Calu3 (cell line): ENCODE measurements at regions of chr14 and their contacts with region 1.

Region 1: DNA sequence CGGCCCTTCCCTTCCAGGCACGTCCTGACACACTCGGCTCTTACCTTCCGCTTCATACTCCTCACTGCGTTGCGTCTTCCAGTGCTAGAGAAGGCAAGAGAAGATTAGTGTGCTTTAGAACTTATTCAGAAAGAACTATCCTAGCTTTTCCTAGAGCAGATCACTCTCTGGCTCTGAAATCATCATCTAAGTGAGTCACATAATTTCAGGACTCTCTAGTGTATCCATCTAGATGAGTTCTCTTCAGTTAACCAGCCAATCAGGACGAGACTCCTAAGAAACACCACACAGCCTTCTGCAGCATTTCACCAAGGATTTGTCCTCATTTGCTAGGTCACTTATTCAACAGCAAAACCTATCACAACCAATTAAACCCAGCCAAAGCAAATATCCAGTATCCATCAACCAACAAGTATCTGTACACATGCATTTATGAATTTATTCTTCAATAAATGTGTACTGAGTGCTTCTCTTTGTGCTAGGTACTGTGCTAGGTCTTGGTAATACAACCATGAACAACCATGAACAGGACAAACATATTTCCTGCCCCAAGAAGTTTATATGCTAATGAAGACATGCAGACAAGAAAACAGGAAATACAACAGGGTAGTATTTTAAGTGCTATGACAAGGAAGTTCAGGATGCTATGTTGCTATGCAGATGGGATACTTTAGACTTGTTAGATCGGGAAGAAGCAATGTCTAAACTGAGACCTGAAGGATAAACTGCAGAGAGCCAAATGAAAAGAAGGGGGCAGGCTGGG is 52.1 kb downstream of the NIN start:
- DNase-seq: no peak
- H3K4me3 Mint-ChIP-seq: no peak overlapping the region
- H3K27ac Mint-ChIP-seq: no peak overlapping the region
- H3K4me1 Mint-ChIP-seq: no peaks in the 10 kb centered on the region
- H3K27me3 Mint-ChIP-seq: no peaks in the 10 kb centered on the region
- CTCF ChIP-seq: no peak

Region 2: GRCh38 chr14:50542941-50543418 is 235.9 kb before region 1 on chr14:
- CTCF ChIA-PET with region 1: interaction called, 3 read pairs
- intact Hi-C with region 1: loop called (anchors 2 kb)
- DNase-seq: peak; percentile 38
- H3K4me3 Mint-ChIP-seq: no peak overlapping the region
- H3K27ac Mint-ChIP-seq: no peak overlapping the region
- H3K4me1 Mint-ChIP-seq: peaks cover 32% of the 10 kb centered on the region
- H3K27me3 Mint-ChIP-seq: no peaks in the 10 kb centered on the region
- CTCF ChIP-seq: no peak